ENCODE measurements at regions of chr1 and their contacts with region 1.

Region 1: DNA sequence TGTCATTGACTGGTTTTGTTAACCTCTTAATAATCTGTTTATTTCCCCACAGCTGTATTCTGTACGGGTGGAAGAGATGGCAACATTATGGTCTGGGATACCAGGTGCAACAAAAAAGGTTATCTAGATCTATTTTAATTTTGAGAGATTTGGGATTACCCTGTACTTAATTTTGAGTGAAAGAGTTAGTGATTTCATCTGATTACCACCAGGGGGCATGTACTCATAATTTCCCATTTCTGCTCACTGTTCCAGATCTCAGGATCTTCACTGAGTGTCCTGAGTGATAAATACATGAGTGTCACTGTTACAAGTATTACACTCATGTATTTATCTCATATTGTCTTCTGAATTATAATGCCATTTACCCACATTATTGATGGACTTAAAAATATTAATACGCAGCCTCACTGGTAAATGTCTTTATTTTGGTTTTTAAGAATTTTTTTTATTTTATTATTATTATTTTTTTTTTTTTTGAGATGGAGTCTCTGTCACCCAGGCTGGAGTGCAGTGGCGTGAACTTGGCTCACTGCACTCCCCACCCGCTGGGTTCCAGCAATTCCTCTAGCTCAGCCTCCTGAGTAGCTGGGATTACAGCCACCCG is 27.4 kb downstream of the DTL start:
- DNase-seq: peak; percentile 46
- H3K4me3 ChIP-seq: no peak overlapping the region
- H3K27ac ChIP-seq: no peak overlapping the region
- H3K4me1 ChIP-seq: no peaks in the 10 kb centered on the region
- H3K27me3 ChIP-seq: no peaks in the 10 kb centered on the region
- CTCF ChIP-seq: peak; percentile 79
- EP300 ChIP-seq: no peak
- RAD21 ChIP-seq: peak; percentile 67

Region 2: DNA sequence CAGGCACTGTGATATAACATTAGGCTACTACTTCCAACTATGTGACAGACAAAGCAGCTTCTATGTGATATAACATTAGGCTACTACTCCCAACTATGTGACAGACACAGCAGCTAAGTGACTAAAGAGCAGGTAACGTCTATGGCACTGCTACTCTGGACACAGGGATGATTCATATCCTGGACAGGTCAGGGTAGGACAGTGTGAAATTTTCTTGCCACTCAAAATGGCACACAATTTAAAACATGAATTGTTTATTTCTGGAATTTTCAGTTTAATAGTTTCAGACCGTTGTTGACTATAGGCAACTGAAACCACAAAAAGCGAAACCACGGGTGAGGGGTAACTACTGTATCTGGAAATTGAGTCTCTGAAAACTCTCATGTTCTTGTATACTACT is 22.3 kb before region 1 on chr1:
- CTCF ChIA-PET with region 1: interaction called, 15 read pairs
- POLR2A ChIA-PET with region 1: no interaction called
- DNase-seq: no peak
- H3K4me3 ChIP-seq: no peak overlapping the region; a peak in 1 of 4 replicates
- H3K27ac ChIP-seq: no peak overlapping the region; a peak in 1 of 4 replicates
- H3K4me1 ChIP-seq: peaks cover 0 to 17% of the 10 kb centered on the region in 2 experiments; a peak in 3 of 4 replicates
- H3K27me3 ChIP-seq: no peaks in the 10 kb centered on the region
- CTCF ChIP-seq: no peak
- EP300 ChIP-seq: no peak
- RAD21 ChIP-seq: no peak

Region 3: DNA sequence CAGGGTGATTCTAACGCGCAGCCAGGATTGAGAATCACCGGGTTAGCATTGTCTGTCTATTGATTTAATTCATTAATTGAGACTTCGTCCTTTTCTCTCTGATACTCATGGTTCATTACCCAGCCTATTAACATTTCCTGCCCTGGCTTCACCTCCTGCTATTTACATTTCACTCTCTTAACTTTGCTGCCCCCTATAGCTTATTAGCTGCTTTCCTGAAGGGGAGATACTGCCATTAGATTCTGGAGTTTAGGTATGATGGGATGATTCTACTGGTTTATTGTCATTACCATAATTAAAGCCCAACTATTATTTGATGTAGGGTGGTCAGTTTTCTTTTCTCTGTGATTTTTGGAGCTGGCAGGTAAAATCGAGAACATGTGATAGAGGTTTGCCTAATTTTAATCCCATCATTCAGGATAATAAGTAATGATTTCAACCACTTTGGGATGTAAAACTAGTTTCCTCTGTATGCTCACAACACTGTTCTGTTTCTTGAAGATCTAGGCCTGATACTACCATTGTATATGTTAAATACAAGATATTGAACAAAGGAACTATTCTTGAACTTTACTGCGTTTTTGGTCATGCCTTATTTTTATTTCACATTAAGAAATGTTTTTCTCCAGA is 228.7 kb after region 1 on chr1:
- CTCF ChIA-PET with region 1: interaction called, 26 read pairs
- POLR2A ChIA-PET with region 1: interaction called, 3 read pairs
- DNase-seq: peak; percentile 71
- H3K4me3 ChIP-seq: no peak overlapping the region
- H3K27ac ChIP-seq: no peak overlapping the region
- H3K4me1 ChIP-seq: peaks cover 7 to 32% of the 10 kb centered on the region in 2 experiments; a peak in 3 of 4 replicates
- H3K27me3 ChIP-seq: no peaks in the 10 kb centered on the region
- CTCF ChIP-seq: peak; percentile 75
- EP300 ChIP-seq: no peak
- RAD21 ChIP-seq: peak; percentile 90

Region 4: DNA sequence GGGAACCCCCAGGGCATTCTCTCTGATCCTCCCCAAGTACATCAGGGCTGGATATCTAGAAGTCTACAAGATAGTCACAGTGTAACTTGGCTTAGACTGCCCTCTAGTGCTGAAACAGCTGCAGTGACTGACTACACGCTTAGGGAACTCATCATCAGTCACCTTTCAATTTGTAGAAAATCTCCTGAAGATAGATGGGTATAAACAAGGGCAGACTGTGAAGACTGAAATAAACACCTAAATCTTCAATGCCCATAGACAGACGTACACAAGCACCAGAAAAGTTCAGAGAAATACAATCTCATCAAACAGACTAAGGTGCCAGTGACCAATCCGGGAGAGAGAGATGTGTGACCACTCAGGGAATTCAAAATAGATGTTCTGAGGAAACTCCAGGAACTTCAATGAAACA is 305.1 kb after region 1 on chr1:
- CTCF ChIA-PET with region 1: interaction called, 20 read pairs
- POLR2A ChIA-PET with region 1: no interaction called
- DNase-seq: peak; percentile 60
- H3K4me3 ChIP-seq: no peak overlapping the region
- H3K27ac ChIP-seq: no peak overlapping the region
- H3K4me1 ChIP-seq: no peaks in the 10 kb centered on the region
- H3K27me3 ChIP-seq: no peaks in the 10 kb centered on the region
- CTCF ChIP-seq: peak; percentile 87
- EP300 ChIP-seq: no peak
- RAD21 ChIP-seq: peak; percentile 82

Measured in SK-N-SH (cell line).